ENCODE measurements at regions of chr1 and their contacts with region 1.

Region 1: DNA sequence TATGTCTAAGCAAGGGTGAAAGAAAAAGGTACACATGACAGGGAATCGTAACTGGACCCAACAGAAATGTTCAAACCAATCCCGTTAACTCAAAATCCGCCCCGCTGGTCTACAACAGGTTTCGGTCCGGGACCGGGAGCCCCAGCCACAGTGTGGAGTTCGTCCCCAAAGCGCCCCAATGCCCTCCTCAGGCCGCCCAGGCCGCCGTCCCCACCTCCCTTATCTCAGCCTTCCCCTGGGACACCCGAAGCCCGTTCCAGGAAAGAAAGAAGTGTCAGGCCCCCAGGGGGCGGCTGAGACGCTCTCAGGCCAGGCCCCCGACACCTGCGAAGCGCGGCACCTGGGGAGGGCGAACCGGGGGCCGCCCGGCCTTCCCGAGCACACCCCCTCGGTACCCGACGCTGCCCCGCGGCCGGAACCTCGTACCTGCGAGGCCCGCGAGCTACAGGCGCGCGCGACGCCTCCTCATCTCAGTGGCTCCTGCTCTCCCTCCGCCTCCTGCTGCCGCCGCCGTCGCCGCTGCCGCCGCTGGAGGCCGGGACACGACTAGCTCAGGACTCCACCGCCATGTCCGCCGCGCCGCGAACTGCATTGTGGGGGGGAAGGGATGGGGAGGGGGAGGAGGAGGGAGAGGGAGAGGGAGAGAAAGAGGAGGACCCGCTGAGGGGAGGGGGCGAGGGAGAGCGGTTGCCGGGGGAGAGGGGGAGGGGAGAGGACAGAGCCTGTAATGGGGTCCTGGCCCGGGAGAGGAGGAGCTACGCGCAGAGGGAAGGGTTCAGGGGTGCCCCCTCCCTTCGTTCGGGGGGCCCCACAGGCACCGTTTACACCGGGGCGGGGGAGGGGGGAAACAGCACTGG is at the start of gene TUT4:
- DNase-seq: peak; percentile 91
- ATAC-seq: peak; percentile 88
- total RNA-seq, gene TUT4: 32.7 TPM

Region 2: GRCh38 chr1:52601991-52602855 is 49.5 kb after region 1 on chr1 and contains the start of gene GPX7:
- intact Hi-C with region 1: loop called (anchors 5 kb)
- DNase-seq: peak; percentile 79
- ATAC-seq: peak; percentile 81
- total RNA-seq, gene GPX7: 4.7 TPM

Region 3: DNA sequence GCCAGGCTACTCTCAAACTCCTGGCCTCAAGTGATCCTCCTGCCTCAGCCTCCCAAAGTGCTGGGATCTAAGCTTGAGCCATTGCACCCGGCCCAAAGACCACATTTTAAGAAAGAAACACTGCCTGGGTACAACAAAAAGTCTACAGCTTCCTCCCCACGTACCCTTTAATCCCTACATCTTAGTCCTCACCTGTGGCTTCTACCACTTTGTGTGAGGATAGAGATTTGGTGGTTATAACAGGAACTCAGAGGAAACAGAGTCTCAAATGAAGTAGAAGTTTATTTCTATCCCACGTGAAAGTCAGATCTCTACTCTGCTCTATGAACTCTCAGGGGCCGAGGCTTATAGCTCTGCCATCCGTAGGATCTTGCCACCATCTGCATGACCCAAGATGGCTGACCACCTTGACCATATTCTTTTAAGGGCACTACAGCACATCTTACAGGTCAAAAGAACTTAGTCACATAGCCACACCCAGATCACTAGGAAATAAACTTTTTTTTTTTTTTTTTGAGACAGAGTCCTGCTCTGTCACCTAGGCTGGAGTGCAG is 62.8 kb after region 1 on chr1:
- intact Hi-C with region 1: no loop called
- DNase-seq: no peak
- ATAC-seq: no peak

Region 4: DNA sequence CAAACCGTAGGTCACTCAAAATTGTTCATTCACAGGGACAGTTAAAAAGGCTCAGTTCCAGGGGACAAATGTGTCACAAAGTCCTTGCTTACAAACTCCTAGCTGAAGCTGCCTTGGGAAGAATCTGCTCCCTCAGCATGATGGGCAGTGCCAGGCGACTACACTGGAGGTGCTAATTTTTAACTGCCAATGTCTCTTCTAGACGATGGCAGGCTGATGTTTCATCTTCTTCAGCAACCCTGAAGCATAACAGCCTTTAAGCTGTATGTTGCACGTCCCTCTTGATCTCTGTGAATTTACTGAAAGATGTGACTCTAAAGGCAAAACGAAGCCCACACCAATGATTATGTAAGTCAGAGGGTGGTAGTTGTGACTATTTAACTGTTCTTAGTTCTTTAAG is 134.1 kb after region 1 on chr1:
- intact Hi-C with region 1: loop called (anchors 5 kb)
- DNase-seq: no peak
- ATAC-seq: no peak

Measured in Right ventricle myocardium inferior (tissue), 1 donor.